Lower leg skin (tissue), 4 donors: ENCODE measurements at regions of chr5 and their contacts with region 1.

Region 1: DNA sequence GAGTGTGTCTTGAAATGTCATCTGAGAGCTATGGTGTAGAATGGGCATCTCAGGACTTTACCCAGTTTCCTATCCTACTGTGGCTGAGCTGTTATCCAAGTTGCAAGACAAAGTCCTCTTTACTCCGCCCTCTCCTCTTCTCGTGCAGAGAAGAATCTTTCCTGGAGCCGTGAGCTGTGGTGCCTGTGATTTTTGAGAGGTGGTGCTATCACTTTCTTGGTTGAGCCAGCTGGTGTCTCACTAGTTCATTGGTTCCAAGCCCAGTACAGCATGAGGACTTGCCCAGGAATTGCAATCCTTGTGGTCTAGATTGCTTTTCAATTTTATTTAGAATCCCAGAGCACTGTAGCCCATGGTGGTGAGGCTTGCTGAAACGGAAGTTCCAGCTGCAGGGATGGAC is 2300.3 kb downstream of the MAT2B start:
- DNase-seq: no peak
- H3K4me3 ChIP-seq: no peak overlapping the region
- CTCF ChIP-seq: no peak
- POLR2A ChIP-seq: no peak

Region 2: DNA sequence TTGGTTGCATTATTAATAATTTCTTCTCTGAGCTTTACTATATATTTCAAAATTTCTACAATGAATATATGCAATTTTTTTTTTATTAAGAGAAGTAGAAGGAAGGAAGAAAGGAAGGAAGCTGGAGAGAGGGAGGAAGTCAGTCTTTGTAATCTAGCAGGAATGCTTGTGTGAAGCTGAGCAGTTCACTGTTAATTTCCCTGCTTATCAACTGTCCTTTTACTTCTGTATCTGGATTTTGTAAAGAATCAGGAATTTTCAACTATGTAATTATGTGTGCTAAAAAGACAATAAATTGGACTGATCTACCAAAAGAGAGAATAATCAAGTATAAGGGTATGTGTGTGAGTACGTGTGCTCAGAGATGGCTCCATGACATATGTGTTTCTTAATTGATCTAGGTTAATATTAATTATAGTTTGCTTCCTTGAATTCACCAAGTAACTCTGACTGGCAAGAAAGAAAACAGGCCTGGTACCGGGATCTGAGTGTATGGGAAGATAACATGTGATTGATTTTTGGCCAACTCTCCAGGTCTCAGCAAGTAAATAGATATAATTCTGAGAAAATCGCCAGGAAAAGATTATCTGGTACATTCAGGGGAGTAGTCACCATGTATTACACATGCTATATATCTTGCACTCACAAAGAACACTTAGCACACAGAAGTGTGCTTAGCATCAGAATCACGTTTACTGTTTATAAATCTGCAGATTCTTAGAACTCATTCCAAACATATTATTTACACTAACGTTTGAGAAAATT is 726.9 kb after region 1 on chr5:
- intact Hi-C with region 1: loop called (anchors 5 kb)
- DNase-seq: no peak
- H3K4me3 ChIP-seq: no peak overlapping the region
- CTCF ChIP-seq: no peak
- POLR2A ChIP-seq: no peak